ENCODE measurements at regions of chr7 and their contacts with region 1.

Region 1: DNA sequence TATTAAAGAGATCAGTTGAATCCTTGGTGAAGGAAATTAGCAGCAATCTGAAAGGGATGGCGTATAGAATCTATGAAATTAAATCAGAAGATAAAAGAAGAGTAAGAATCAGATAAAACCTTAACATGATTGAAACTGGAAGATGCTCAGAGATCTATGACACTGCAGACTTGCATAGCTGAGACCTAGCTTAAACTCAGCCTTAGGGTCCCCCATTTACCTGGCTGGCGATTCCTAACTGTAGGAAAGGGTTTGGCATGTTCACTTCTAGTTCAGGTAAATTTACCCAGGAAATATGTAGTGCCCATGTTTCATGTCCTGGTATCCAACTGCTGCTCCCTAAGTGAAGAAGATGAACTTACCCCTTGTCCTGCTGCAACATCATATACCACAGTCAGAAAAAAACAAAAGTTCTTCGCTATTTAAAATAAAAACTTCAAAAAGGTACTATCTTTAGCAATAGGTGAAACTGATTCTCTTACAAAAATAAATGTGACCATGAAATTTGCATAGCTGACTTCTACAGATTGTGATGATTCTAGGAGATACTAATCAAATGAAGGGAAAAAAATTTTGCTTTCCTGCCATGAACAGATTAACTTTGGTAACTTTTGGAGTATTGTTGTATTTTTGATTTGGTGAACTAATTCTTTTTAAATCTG is 47.8 kb upstream of the TMEM243 start:
- DNase-seq: no peak
- H3K4me3 ChIP-seq: no peak overlapping the region
- H3K27ac ChIP-seq: no peak overlapping the region
- H3K4me1 ChIP-seq: no peaks in the 10 kb centered on the region
- H3K27me3 ChIP-seq: peaks cover 10% of the 10 kb centered on the region; the same call in 1 of the 2 replicates
- CTCF ChIP-seq: no peak

Region 2: GRCh38 chr7:88216276-88216675 is 948.9 kb after region 1 on chr7:
- CTCF ChIA-PET with region 1: no interaction called
- POLR2A ChIA-PET with region 1: no interaction called
- intact Hi-C with region 1: no loop called
- DNase-seq: no peak
- H3K4me3 ChIP-seq: no peak overlapping the region
- H3K27ac ChIP-seq: no peak overlapping the region
- H3K4me1 ChIP-seq: peaks cover 29% of the 10 kb centered on the region
- H3K27me3 ChIP-seq: no peaks in the 10 kb centered on the region
- CTCF ChIP-seq: no peak

Region 3: GRCh38 chr7:89223900-89224395 is 1956.6 kb after region 1 on chr7:
- CTCF ChIA-PET with region 1: no interaction called
- POLR2A ChIA-PET with region 1: interaction called, 16 read pairs
- intact Hi-C with region 1: no loop called
- DNase-seq: no peak
- H3K4me3 ChIP-seq: no peak overlapping the region
- H3K27ac ChIP-seq: no peak overlapping the region
- H3K4me1 ChIP-seq: no peaks in the 10 kb centered on the region
- H3K27me3 ChIP-seq: no peaks in the 10 kb centered on the region
- CTCF ChIP-seq: no peak